ENCODE measurements at regions of chr11 and their contacts with region 1.

Region 1: DNA sequence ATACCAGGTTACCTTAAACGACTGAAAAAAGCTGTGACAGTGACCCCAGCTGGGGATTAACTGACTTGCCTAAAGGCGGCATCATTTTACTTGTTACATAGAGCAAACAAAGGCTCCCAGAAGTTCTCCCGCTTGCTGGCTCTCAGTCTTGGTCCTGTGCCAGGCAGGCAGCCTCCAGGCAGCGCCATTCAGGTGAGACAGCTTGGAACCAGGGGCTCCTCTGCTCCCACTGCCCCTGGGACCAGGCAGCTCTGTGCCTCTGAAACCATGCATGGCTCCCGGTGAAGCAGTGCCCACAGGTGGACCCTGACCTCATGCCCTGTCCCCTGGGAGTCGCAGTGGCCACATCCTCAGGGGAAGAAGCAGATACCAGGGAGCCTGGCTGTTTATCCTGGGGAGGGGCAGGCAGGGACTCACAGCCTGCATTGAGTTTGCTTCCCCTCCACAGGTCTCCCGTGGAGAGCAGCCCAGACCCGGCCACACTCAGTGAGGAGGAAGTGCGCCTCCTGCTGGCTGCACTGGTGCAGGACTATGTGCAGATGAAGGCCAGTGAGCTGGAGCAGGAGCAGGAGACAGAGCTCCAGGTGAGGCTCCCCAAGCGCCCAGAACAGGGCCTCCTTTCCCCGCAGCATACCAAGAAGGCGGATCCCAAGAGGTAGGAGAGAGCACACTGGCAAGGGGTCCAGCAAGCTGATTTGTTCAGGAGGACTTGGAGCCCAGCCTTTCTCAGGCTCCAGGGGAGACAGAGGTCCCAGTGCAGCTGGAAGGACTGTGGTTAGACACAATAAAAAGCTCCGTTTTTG is 15.6 kb upstream of the CYP2R1 start:
- DNase-seq: peak; percentile 84
- H3K4me3 ChIP-seq: peak overlapping the region; percentile 13
- H3K27ac ChIP-seq: peak overlapping the region; percentile 75
- H3K4me1 ChIP-seq: peaks cover 21% of the 10 kb centered on the region
- H3K27me3 ChIP-seq: no peaks in the 10 kb centered on the region
- CTCF ChIP-seq: peak; percentile 83

Region 2: GRCh38 chr11:14623036-14623435 is 284.6 kb before region 1 on chr11:
- CTCF ChIA-PET with region 1: interaction called, 13 read pairs
- POLR2A ChIA-PET with region 1: no interaction called
- intact Hi-C with region 1: no loop called
- DNase-seq: peak; percentile 1
- H3K4me3 ChIP-seq: no peak overlapping the region
- H3K27ac ChIP-seq: no peak overlapping the region
- H3K4me1 ChIP-seq: no peaks in the 10 kb centered on the region
- H3K27me3 ChIP-seq: no peaks in the 10 kb centered on the region
- CTCF ChIP-seq: no peak

Region 3: DNA sequence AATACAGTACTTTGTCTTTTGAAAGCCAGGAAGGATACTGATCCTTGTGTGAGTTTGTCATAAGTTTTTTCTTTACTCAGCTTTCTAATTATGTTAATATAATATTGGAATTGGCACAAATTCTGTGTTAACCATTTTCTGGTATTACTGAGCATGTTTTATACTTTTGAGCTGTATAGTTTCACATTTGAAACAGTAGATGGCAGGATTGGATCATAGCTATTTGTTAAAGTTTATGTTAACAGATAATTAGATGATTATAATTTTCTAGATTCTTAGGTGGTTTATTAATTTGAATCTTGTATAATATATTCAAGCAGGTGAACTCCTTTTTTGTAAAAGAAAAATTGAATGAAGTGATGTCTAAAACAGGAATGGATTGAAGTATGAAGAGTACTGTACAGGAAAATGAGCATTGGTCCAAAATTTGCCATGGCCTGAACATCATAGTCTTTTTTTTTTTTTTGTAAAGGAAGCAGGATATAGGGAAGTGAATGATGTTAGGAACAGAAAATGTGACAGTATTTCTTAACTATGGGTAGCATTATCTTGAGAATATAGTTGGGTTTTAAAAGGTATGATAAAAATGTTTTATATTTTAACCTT is 117.6 kb before region 1 on chr11:
- CTCF ChIA-PET with region 1: interaction called, 40 read pairs
- POLR2A ChIA-PET with region 1: no interaction called
- intact Hi-C with region 1: loop called (anchors 1 kb)
- DNase-seq: peak; percentile 22
- H3K4me3 ChIP-seq: no peak overlapping the region
- H3K27ac ChIP-seq: no peak overlapping the region
- H3K4me1 ChIP-seq: peaks cover 17% of the 10 kb centered on the region
- H3K27me3 ChIP-seq: no peaks in the 10 kb centered on the region
- CTCF ChIP-seq: peak; percentile 67

Region 4: GRCh38 chr11:15006139-15006759 is 98.6 kb after region 1 on chr11:
- CTCF ChIA-PET with region 1: interaction called, 12 read pairs
- POLR2A ChIA-PET with region 1: no interaction called
- intact Hi-C with region 1: loop called (anchors 5 kb)
- DNase-seq: peak; percentile 66
- H3K4me3 ChIP-seq: no peak overlapping the region
- H3K27ac ChIP-seq: no peak overlapping the region
- H3K4me1 ChIP-seq: no peaks in the 10 kb centered on the region
- H3K27me3 ChIP-seq: no peaks in the 10 kb centered on the region
- CTCF ChIP-seq: peak; percentile 55

Region 5: DNA sequence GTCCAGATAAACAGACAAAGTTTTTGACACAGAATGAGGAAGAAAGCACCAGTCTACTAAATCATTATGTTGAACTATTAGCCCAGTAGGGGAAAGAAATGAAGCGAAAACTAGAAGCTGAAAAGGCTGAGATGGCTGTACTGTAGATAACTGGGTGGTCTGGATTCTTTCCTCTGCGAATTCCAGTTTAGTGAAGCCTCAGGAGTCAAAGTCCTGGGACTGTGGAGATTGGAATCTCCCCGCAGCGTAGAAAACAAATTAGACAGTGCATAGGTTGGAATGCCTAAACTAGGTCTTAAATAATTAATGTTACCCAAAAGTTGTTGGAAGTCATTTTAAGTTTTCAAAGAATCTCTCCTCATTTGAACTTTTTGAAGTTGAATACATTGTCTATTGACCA is 159.0 kb after region 1 on chr11:
- CTCF ChIA-PET with region 1: no interaction called
- POLR2A ChIA-PET with region 1: no interaction called
- intact Hi-C with region 1: no loop called
- DNase-seq: no peak
- H3K4me3 ChIP-seq: no peak overlapping the region
- H3K27ac ChIP-seq: no peak overlapping the region
- H3K4me1 ChIP-seq: no peaks in the 10 kb centered on the region
- H3K27me3 ChIP-seq: no peaks in the 10 kb centered on the region
- CTCF ChIP-seq: no peak

Region 6: GRCh38 chr11:15208378-15209222 is 301.0 kb after region 1 on chr11:
- CTCF ChIA-PET with region 1: no interaction called
- POLR2A ChIA-PET with region 1: no interaction called
- intact Hi-C with region 1: loop called (anchors 2 kb)
- DNase-seq: peak; percentile 75
- H3K4me3 ChIP-seq: no peak overlapping the region
- H3K27ac ChIP-seq: no peak overlapping the region
- H3K4me1 ChIP-seq: no peaks in the 10 kb centered on the region
- H3K27me3 ChIP-seq: no peaks in the 10 kb centered on the region
- CTCF ChIP-seq: peak; percentile 88